ENCODE measurements at regions of chr10 and their contacts with region 1.

Region 1: DNA sequence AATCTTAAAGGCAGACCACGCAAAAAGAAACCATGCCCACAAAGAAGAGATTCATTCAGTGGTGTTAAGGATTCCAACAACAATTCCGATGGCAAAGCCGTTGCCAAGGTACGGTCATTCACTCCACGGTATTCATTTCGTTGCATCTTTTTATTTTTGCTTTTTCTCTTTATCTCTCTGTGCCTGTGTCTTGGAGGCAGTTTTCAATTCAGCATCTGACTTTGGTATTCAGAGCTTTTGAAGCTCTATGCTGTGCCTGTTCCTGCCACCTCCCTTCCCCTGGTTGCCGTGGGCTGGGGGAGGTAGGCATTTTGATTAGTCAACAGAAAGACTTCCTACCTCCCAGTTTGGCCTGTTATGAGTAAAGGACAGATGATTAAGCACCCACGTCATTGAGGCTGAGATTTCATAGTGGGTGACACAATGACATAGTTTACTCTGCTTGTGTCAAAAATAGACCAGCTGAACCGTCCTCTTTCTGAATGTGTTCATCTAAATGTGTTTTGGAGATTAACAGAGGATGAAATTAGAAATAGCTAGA is 149.5 kb downstream of the ARID5B start:
- H3K4me3 ChIP-seq: peak overlapping the region; percentile 16
- H3K27ac ChIP-seq: no peak overlapping the region
- H3K4me1 ChIP-seq: peaks cover 38% of the 10 kb centered on the region
- CTCF ChIP-seq: no peak

Region 2: DNA sequence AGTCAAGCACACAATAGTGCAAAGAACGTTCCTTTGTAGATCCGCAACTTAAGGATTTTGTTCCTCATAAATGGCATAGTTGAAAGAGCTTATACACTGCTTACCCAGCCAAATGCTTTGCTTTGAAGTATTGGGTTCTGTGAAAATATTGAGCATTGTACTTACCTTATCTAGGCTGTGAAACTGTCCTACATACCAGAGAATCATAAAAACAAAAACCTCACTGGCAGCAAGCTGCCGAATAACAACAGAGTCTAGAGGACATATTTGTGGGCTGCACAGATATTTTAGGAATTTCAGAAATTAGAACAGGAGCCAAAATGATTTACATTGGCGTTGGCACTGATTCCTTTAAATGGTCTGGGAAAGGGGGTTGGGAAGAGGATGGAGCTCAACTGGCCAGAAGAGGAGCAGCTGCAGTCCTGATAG is 42.9 kb after region 1 on chr10:
- CTCF ChIA-PET with region 1: no interaction called
- POLR2A ChIA-PET with region 1: interaction called, 11 read pairs
- H3K4me3 ChIP-seq: no peak overlapping the region
- H3K27ac ChIP-seq: no peak overlapping the region
- H3K4me1 ChIP-seq: no peaks in the 10 kb centered on the region
- CTCF ChIP-seq: no peak